ENCODE measurements at regions of chr10 and their contacts with region 1.

Region 1: GRCh38 chr10:77710759-77711682 is 73.4 kb upstream of the KCNMA1 start:
- DNase-seq: peak; percentile 81 to 94
- ATAC-seq: peak; percentile 94
- H3K4me3 ChIP-seq: peak overlapping the region; percentile 6 to 28
- H3K27ac ChIP-seq: no peak overlapping the region
- H3K4me1 ChIP-seq: no peaks in the 10 kb centered on the region
- H3K27me3 ChIP-seq: no peaks in the 10 kb centered on the region

Region 2: GRCh38 chr10:77139252-77140160 is 571.5 kb before region 1 on chr10:
- intact Hi-C with region 1: no loop called
- DNase-seq: no peak
- ATAC-seq: no peak
- H3K4me3 ChIP-seq: no peak overlapping the region
- H3K27ac ChIP-seq: no peak overlapping the region
- H3K4me1 ChIP-seq: no peaks in the 10 kb centered on the region
- H3K27me3 ChIP-seq: no peaks in the 10 kb centered on the region

Region 3: GRCh38 chr10:77165445-77166208 is 545.4 kb before region 1 on chr10:
- intact Hi-C with region 1: loop called (anchors 2 to 5 kb)
- DNase-seq: no peak
- ATAC-seq: peak; percentile 80
- H3K4me3 ChIP-seq: peak overlapping the region in 1 of 2 donors; percentile 28
- H3K27ac ChIP-seq: no peak overlapping the region
- H3K4me1 ChIP-seq: peaks cover 5 to 11% of the 10 kb centered on the region in 2 donors
- H3K27me3 ChIP-seq: no peaks in the 10 kb centered on the region

Region 4: DNA sequence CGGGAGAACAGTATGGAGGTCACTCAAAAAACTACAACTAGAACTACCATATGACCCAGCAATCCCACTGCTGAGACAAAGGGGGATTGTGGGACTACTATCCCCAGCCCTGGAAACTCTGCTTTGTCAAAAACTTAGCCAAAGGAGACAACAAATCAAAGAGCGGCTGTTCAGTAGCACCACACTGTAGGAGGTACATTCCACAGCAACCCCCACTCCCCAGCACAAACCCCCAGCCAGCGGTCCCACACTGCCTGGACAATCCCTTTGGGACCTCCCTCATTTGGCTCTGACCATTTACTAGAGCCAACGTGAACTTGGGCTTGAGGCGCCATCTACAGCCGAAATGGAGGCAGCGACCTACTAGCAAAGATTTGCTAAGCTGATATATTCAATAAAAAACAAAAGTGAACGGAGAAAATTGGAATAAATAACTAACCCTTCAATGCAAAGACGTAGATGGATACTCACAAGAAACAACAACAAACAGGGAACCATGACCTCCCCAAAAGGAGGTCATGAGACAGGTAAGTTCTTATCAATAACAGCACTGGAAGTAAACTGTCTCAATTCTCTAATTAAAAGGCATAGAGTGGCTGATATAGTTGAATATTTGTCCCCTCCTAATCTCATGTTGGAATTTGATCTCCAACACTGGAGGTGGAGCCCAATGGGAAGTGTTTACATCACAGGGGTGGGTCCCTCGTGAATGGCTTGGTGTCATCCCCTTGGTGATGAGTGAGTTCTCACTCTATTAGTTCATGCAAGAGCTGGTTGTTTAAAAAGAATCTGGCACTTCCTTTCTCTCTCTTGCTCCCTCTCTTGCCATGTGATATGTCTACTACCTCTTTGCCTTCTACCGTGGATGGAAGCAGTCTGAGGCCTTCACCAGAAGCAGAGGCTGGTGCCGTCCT is 45.6 kb after region 1 on chr10:
- intact Hi-C with region 1: loop called in 1 of 2 experiments (anchors 5 kb)
- DNase-seq: no peak
- ATAC-seq: no peak
- H3K4me3 ChIP-seq: no peak overlapping the region
- H3K27ac ChIP-seq: no peak overlapping the region
- H3K4me1 ChIP-seq: no peaks in the 10 kb centered on the region
- H3K27me3 ChIP-seq: no peaks in the 10 kb centered on the region

Region 5: GRCh38 chr10:77970869-77971803 is 260.1 kb after region 1 on chr10:
- intact Hi-C with region 1: no loop called
- DNase-seq: peak; percentile 82 to 86
- ATAC-seq: peak; percentile 87
- H3K4me3 ChIP-seq: no peak overlapping the region
- H3K27ac ChIP-seq: peak overlapping the region; percentile 9 to 53
- H3K4me1 ChIP-seq: peaks cover 3% of the 10 kb centered on the region in 2 donors
- H3K27me3 ChIP-seq: no peaks in the 10 kb centered on the region

Measured in aorta (tissue), 5 donors.